PC-9 (cell line): ENCODE measurements at regions of chr17 and their contacts with region 1.

Region 1: GRCh38 chr17:7972131-7972785 is 30.2 kb upstream of the GUCY2D start:
- DNase-seq: no peak
- H3K4me3 ChIP-seq: no peak overlapping the region
- H3K27ac ChIP-seq: no peak overlapping the region
- H3K4me1 ChIP-seq: no peaks in the 10 kb centered on the region
- H3K27me3 ChIP-seq: no peaks in the 10 kb centered on the region
- CTCF ChIP-seq: peak; percentile 48; the same call in 1 of the 2 replicates

Region 2: DNA sequence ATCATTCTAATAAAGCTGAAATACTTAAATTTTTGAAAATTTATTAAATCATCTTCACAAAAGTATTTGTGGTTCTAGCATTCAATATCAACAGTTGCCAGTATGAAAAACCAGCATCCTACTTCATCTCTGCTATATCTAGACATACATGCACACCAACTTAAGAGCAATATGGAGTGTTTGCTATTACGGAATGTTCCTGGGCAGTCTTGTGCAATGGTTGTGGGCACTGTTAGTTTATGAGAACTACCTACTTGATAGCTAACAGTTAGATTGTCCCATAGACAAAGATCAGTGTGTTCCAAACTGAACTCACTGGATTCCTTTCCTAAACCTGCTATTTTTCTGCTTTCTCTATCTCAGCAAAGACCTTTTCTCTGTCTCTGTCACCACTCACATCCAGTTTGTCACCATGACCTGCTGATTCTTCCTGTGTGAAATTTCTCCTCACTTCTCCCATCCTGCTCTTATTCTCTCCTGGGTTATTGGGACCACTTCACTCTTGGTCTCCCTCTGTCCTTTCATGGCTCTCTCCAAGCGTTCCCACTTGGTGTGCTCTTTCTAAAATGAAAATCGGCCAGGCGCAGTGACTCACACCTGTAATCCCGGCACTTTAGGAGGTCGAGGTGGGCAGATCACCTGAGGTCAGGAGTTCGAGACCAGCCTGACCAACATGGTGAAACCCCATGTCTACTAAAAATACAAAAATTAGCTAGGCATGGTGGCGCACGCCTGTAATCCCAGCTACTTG is 12.6 kb before region 1 on chr17:
- CTCF ChIA-PET with region 1: interaction called, 10 read pairs
- POLR2A ChIA-PET with region 1: no interaction called
- intact Hi-C with region 1: no loop called
- DNase-seq: no peak
- H3K4me3 ChIP-seq: no peak overlapping the region
- H3K27ac ChIP-seq: no peak overlapping the region
- H3K4me1 ChIP-seq: peaks cover 5% of the 10 kb centered on the region; the same call in 1 of the 2 replicates
- H3K27me3 ChIP-seq: no peaks in the 10 kb centered on the region
- CTCF ChIP-seq: no peak

Region 3: GRCh38 chr17:8029135-8029534 is 56.9 kb after region 1 on chr17:
- CTCF ChIA-PET with region 1: interaction called, 16 read pairs
- POLR2A ChIA-PET with region 1: no interaction called
- intact Hi-C with region 1: no loop called
- DNase-seq: peak; percentile 61 to 74
- H3K4me3 ChIP-seq: no peak overlapping the region
- H3K27ac ChIP-seq: no peak overlapping the region
- H3K4me1 ChIP-seq: peaks cover 9% of the 10 kb centered on the region
- H3K27me3 ChIP-seq: no peaks in the 10 kb centered on the region
- CTCF ChIP-seq: no peak